B cell (primary cell): ENCODE measurements at regions of chr14 and their contacts with region 1.

Region 1: GRCh38 chr14:72516936-72517700 is 376.8 kb downstream of the DPF3 start:
- DNase-seq: peak; percentile 87
- ATAC-seq: peak; percentile 64
- H3K4me3 ChIP-seq: no peak overlapping the region
- H3K4me3 Mint-ChIP-seq: peak overlapping the region; percentile 56
- H3K27ac ChIP-seq: peak overlapping the region; percentile 74 to 84
- H3K27ac Mint-ChIP-seq: peak overlapping the region; percentile 92
- H3K4me1 ChIP-seq: peaks cover 58 to 65% of the 10 kb centered on the region in 2 donors
- H3K4me1 Mint-ChIP-seq: peaks cover 57% of the 10 kb centered on the region
- H3K27me3 ChIP-seq: peaks cover 0 to under 1% (median 0%) of the 10 kb centered on the region in 4 experiments
- H3K27me3 Mint-ChIP-seq: no peaks in the 10 kb centered on the region
- CTCF ChIP-seq: peak; percentile 92

Region 2: DNA sequence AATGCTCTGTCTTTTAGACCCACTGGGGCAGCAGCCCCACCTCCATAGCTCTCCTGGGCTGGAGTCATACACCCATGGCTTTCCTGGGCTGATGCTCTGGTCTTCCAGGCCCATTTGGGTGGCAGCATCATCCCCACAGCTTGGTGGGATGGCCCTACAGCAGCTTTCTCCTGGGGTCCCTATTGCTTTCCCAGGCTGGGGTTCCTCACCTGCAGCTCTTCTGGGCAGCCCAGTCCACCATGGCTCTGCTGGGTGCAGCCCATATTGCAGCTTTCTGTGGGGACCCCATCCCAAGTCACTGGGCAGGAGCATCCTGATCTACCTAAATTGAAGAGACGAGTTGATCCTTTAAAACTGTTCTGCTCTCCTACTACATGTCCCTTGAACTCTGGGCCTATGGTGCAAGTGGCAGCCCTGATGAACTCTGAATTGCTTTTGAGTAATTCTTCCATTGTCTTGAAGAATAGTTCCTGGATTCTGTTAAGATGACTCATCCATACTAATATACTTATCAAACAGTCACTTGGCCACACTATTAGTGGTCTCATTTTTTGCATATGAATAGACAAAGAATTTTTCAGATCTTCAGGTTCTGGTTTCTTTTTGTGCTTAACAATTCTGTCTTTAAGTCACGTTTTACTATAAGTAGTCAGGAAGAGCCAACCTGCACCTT is 13.3 kb before region 1 on chr14:
- CTCF ChIA-PET with region 1: interaction called, 14 read pairs
- POLR2A ChIA-PET with region 1: no interaction called
- intact Hi-C with region 1: no loop called
- DNase-seq: no peak
- ATAC-seq: no peak
- H3K4me3 ChIP-seq: no peak overlapping the region
- H3K4me3 Mint-ChIP-seq: no peak overlapping the region
- H3K27ac ChIP-seq: no peak overlapping the region
- H3K27ac Mint-ChIP-seq: no peak overlapping the region
- H3K4me1 ChIP-seq: no peaks in the 10 kb centered on the region
- H3K4me1 Mint-ChIP-seq: no peaks in the 10 kb centered on the region
- H3K27me3 ChIP-seq: peaks cover 0 to 7% (median 0%) of the 10 kb centered on the region in 4 experiments
- H3K27me3 Mint-ChIP-seq: peaks cover 16% of the 10 kb centered on the region
- CTCF ChIP-seq: no peak

Region 3: DNA sequence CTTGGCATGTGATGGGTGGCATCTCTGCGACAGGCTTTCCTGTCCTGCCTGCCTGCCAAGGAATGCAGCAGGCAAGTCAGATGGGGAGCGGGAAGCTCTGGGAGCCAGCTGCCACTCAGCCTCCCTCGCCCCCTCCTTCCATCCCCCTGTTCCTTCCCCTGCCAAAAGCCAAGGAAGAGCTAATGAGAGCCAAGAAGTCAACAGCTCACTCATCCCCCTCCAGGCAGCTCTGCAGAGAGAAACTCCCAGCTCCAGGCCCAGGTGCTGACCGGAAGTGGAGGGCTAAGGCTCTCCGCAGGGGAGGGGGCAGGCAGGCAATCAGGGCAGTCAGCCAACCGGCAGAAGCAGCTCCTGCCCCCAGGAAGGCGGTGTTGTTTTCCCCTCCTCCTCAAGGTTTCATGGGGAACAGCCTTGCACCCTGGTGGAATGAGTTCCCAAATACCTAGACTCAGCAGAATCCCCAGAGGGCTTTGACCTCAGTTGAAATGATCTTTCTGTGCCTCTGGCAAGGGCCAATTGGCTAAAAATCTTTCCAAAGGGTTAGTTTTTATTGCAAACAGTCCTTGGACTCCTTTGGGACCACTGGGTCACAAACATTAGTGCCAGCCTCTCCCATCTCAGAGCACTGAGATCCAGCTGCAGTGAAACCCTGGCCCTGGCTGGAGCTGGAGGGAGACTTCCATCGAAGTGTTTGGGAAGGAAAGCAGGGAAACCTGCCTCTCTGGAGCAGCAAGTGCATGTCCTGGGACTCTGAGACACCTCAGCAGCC is 27.7 kb after region 1 on chr14:
- CTCF ChIA-PET with region 1: interaction called, 13 read pairs
- POLR2A ChIA-PET with region 1: no interaction called
- intact Hi-C with region 1: no loop called
- DNase-seq: no peak
- ATAC-seq: no peak
- H3K4me3 ChIP-seq: no peak overlapping the region
- H3K4me3 Mint-ChIP-seq: no peak overlapping the region
- H3K27ac ChIP-seq: no peak overlapping the region
- H3K27ac Mint-ChIP-seq: peak overlapping the region; percentile 79
- H3K4me1 ChIP-seq: peaks cover 56 to 64% of the 10 kb centered on the region in 2 donors
- H3K4me1 Mint-ChIP-seq: peaks cover 62% of the 10 kb centered on the region
- H3K27me3 ChIP-seq: no peaks in the 10 kb centered on the region
- H3K27me3 Mint-ChIP-seq: no peaks in the 10 kb centered on the region
- CTCF ChIP-seq: no peak

Region 4: DNA sequence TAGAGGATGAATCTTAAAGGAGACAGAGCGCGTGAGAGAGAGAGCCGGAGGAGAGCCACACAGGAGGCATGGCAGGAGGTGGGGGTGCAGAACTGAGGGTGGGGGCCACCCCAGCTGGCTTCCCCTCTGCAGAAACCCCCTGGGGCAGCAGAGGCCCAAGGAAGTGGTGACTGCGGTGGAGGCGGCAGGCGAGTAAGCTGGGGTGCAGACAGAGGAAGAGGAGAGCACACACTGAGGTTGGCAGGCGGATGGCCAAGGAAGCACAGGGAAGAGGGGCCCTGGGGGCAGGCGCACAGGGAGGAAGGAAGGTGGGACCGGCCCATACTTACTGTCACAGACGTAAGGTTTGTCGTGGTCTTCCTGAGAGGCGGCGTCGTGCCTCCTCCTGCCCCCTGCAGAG is 197.0 kb after region 1 on chr14:
- CTCF ChIA-PET with region 1: interaction called, 5 read pairs
- POLR2A ChIA-PET with region 1: no interaction called
- intact Hi-C with region 1: loop called (anchors 1 kb)
- DNase-seq: peak; percentile 81
- ATAC-seq: peak; percentile 89
- H3K4me3 ChIP-seq: peak overlapping the region in 4 of 5 experiments; percentile 9 to 44 (median 26)
- H3K4me3 Mint-ChIP-seq: peak overlapping the region; percentile 77
- H3K27ac ChIP-seq: peak overlapping the region; percentile 26 to 48
- H3K27ac Mint-ChIP-seq: peak overlapping the region; percentile 90
- H3K4me1 ChIP-seq: peaks cover 48 to 50% of the 10 kb centered on the region in 2 donors
- H3K4me1 Mint-ChIP-seq: peaks cover 54% of the 10 kb centered on the region
- H3K27me3 ChIP-seq: no peaks in the 10 kb centered on the region
- H3K27me3 Mint-ChIP-seq: no peaks in the 10 kb centered on the region
- CTCF ChIP-seq: no peak

Region 5: GRCh38 chr14:72893636-72894321 is 376.7 kb after region 1 on chr14 and contains the start of gene DPF3:
- CTCF ChIA-PET with region 1: interaction called, 40 read pairs
- POLR2A ChIA-PET with region 1: interaction called, 5 read pairs
- intact Hi-C with region 1: loop called (anchors 1 kb)
- DNase-seq: peak; percentile 94
- ATAC-seq: peak; percentile 98
- H3K4me3 ChIP-seq: peak within 1 kb of the TSS; percentile 84 to 94 (median 89)
- H3K4me3 Mint-ChIP-seq: peak within 1 kb of the TSS; percentile 92
- H3K27ac ChIP-seq: peak within 1 kb of the TSS in 1 of 2 donors; percentile 38
- H3K27ac Mint-ChIP-seq: peak within 1 kb of the TSS; percentile 70
- H3K4me1 ChIP-seq: peaks cover 17 to 25% of the 10 kb centered on the region in 2 donors
- H3K4me1 Mint-ChIP-seq: peaks cover 33% of the 10 kb centered on the region
- H3K27me3 ChIP-seq: peaks cover 0 to 18% (median 5%) of the 10 kb centered on the region in 4 experiments
- H3K27me3 Mint-ChIP-seq: peaks cover 6% of the 10 kb centered on the region
- CTCF ChIP-seq: no peak
- total RNA-seq, gene DPF3: 3.4 and 3.7 TPM in 2 replicates

Region 6: GRCh38 chr14:72926292-72927028 is 409.3 kb after region 1 on chr14 and contains the start of gene DCAF4:
- CTCF ChIA-PET with region 1: interaction called, 7 read pairs
- POLR2A ChIA-PET with region 1: interaction called, 6 read pairs
- intact Hi-C with region 1: loop called (anchors 1 kb)
- DNase-seq: peak; percentile 97
- ATAC-seq: peak; percentile 91
- H3K4me3 ChIP-seq: peak within 1 kb of the TSS; percentile 55 to 87 (median 70)
- H3K4me3 Mint-ChIP-seq: peak within 1 kb of the TSS; percentile 99
- H3K27ac ChIP-seq: peak within 1 kb of the TSS; percentile 66 to 89
- H3K27ac Mint-ChIP-seq: peak within 1 kb of the TSS; percentile 95
- H3K4me1 ChIP-seq: peaks cover 10 to 23% of the 10 kb centered on the region in 2 donors
- H3K4me1 Mint-ChIP-seq: peaks cover 15% of the 10 kb centered on the region
- H3K27me3 ChIP-seq: no peaks in the 10 kb centered on the region
- H3K27me3 Mint-ChIP-seq: peaks cover 7% of the 10 kb centered on the region
- CTCF ChIP-seq: no peak
- total RNA-seq, gene DCAF4: 35.3 and 36.2 TPM in 2 replicates

Region 7: DNA sequence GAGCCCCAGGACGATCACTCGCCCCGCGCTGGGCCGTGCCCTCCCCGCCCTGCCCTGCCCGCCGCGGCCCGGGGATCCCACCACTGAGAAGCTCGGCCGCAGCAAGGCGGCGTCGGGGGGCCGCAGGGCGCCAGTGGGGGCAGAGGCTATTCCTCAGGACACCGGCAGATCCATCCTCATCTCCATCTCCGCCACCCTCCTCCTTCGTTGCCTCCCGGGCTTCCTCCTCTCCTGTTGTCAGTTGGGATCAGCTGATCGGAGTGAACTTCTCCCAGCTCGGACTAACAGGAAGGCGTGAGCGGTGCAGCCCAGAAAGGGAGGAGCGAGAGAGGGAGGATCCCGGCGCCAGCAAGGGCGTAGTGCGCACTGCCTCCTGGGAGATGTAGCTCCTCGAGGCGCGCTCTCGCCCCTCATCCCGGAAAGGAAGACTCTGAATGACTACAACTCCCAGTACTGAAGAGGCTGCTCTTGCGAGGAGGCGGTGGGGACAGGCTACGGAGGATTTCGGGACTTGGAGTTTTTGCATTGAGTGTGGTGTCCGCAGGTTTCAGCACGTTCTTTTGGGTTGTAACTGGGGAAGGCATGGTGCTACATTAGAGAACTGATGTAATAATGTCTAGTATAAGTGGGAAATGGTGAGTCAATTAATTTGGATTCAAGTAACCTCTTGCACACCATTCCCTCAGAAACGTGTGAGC is 509.9 kb after region 1 on chr14 and contains the start of gene ZFYVE1:
- CTCF ChIA-PET with region 1: no interaction called
- POLR2A ChIA-PET with region 1: no interaction called
- intact Hi-C with region 1: loop called (anchors 1 kb)
- DNase-seq: peak; percentile 92
- ATAC-seq: peak; percentile 99
- H3K4me3 ChIP-seq: peak within 1 kb of the TSS; percentile 69 to 97 (median 95)
- H3K4me3 Mint-ChIP-seq: peak within 1 kb of the TSS; percentile 96
- H3K27ac ChIP-seq: peak within 1 kb of the TSS in 1 of 2 donors; percentile 71
- H3K27ac Mint-ChIP-seq: peak within 1 kb of the TSS; percentile 94
- H3K4me1 ChIP-seq: peaks cover 16 to 18% of the 10 kb centered on the region in 2 donors
- H3K4me1 Mint-ChIP-seq: peaks cover 38% of the 10 kb centered on the region
- H3K27me3 ChIP-seq: no peaks in the 10 kb centered on the region
- H3K27me3 Mint-ChIP-seq: no peaks in the 10 kb centered on the region
- CTCF ChIP-seq: no peak
- total RNA-seq, gene ZFYVE1: 21.2 and 22.3 TPM in 2 replicates